Lower leg skin (tissue), 4 donors: ENCODE measurements at regions of chr11 and their contacts with region 1.

Region 1: GRCh38 chr11:14454861-14455632 is 44.6 kb downstream of the COPB1 start:
- DNase-seq: no peak
- H3K4me3 ChIP-seq: no peak overlapping the region
- CTCF ChIP-seq: no peak
- POLR2A ChIP-seq: no peak

Region 2: DNA sequence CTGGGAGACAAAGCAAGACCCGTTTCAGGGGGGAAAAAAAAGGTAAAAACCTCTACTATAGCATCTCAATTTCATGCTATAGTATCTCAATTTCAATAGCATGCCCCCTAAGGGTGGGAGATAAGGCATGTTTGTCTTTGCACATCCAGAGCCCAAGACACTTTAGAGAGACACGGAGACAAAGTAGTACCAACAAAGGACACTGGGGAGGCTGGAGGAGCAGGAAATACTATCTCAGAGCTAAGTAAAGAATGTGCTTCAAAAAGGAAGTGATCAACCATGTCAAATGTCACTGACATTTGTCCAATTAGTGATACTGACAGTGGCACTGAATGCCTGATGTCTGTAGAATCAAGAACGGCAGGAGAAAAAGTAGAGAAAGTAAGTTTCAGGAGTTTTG is 164.6 kb before region 1 on chr11:
- intact Hi-C with region 1: loop called (anchors 10 kb)
- DNase-seq: no peak
- H3K4me3 ChIP-seq: no peak overlapping the region
- CTCF ChIP-seq: no peak
- POLR2A ChIP-seq: no peak

Region 3: GRCh38 chr11:14443638-14444037 is 11.4 kb before region 1 on chr11:
- intact Hi-C with region 1: loop called (anchors 1 kb)
- DNase-seq: no peak
- H3K4me3 ChIP-seq: no peak overlapping the region
- CTCF ChIP-seq: no peak
- POLR2A ChIP-seq: no peak